Psoas muscle (tissue), 8 donors: ENCODE measurements at regions of chr12 and their contacts with region 1.

Region 1: GRCh38 chr12:15789220-15790171 is at the start of gene EPS8:
- DNase-seq: peak; percentile 94 to 96
- ATAC-seq: peak; percentile 96 to 98 (median 98)
- H3K4me3 ChIP-seq: peak within 1 kb of the TSS; percentile 97
- H3K27ac ChIP-seq: peak within 1 kb of the TSS; percentile 88
- H3K4me1 ChIP-seq: no peaks in the 10 kb centered on the region
- H3K27me3 ChIP-seq: no peaks in the 10 kb centered on the region
- CTCF ChIP-seq: no peak
- total RNA-seq, gene EPS8: 10.5 to 16.9 (median 14.0) TPM

Region 2: GRCh38 chr12:15556411-15557102 is 232.9 kb before region 1 on chr12:
- intact Hi-C with region 1: no loop called
- DNase-seq: no peak
- ATAC-seq: no peak
- H3K4me3 ChIP-seq: no peak overlapping the region
- H3K27ac ChIP-seq: no peak overlapping the region
- H3K4me1 ChIP-seq: no peaks in the 10 kb centered on the region
- H3K27me3 ChIP-seq: no peaks in the 10 kb centered on the region
- CTCF ChIP-seq: no peak

Region 3: DNA sequence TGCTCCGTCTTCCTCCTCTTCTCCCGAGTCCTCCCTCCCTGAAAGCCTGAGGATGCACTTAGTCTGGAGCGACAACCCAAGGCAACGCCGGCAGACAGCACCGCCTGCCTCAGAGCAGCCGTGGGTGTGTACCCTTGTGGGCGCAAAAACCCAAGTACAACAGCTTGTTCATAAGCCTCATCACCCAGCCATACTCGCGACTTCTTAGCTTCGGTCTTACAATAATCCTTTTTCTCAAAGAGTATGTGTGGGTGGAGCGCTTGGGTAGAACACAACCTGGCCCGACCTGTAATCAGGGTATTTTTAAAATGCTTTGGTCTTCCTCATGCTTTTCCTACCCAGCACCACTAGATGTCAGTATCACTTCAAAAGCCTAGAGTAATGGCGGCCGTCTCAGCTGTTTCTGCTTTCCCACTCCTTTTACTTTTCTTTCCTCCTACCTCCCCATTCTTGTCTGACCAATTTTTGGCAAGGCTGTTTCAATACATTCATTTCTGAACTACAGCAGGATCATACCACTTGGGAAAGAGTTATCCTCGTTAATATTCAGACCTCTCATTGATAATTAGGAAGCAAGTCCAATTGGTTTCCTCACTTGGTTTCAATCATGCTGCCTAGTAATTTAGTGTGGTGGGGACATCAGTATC is 199.2 kb before region 1 on chr12:
- intact Hi-C with region 1: loop called in 1 of 2 experiments (anchors 5 kb)
- DNase-seq: peak in 1 of 2 donors; percentile 49
- ATAC-seq: peak; percentile 83 to 98 (median 90)
- H3K4me3 ChIP-seq: peak overlapping the region; percentile 43
- H3K27ac ChIP-seq: no peak overlapping the region
- H3K4me1 ChIP-seq: no peaks in the 10 kb centered on the region
- H3K27me3 ChIP-seq: no peaks in the 10 kb centered on the region
- CTCF ChIP-seq: peak; percentile 89

Region 4: GRCh38 chr12:15846887-15847286 is 57.4 kb after region 1 on chr12:
- intact Hi-C with region 1: loop called in 1 of 2 experiments (anchors 5 kb)
- DNase-seq: no peak
- ATAC-seq: peak in 1 of 4 donors; percentile 76
- H3K4me3 ChIP-seq: no peak overlapping the region
- H3K27ac ChIP-seq: no peak overlapping the region
- H3K4me1 ChIP-seq: peaks cover 17% of the 10 kb centered on the region
- H3K27me3 ChIP-seq: no peaks in the 10 kb centered on the region
- CTCF ChIP-seq: no peak

Region 5: GRCh38 chr12:15856097-15856982 is 66.8 kb after region 1 on chr12:
- intact Hi-C with region 1: loop called in 1 of 2 experiments (anchors 5 kb)
- DNase-seq: no peak
- ATAC-seq: peak; percentile 52 to 88 (median 66)
- H3K4me3 ChIP-seq: no peak overlapping the region
- H3K27ac ChIP-seq: no peak overlapping the region
- H3K4me1 ChIP-seq: no peaks in the 10 kb centered on the region
- H3K27me3 ChIP-seq: no peaks in the 10 kb centered on the region
- CTCF ChIP-seq: peak; percentile 91